ENCODE measurements at regions of chr2 and their contacts with region 1.

Region 1: GRCh38 chr2:241129086-241129871 is 20.0 kb downstream of the PASK start:
- DNase-seq: no peak
- H3K4me3 ChIP-seq: no peak overlapping the region
- H3K27ac ChIP-seq: no peak overlapping the region
- H3K4me1 ChIP-seq: no peaks in the 10 kb centered on the region
- H3K27me3 ChIP-seq: no peaks in the 10 kb centered on the region
- CTCF ChIP-seq: no peak
- POLR2A ChIP-seq: no peak

Region 2: GRCh38 chr2:239216614-239217273 is 1912.5 kb before region 1 on chr2:
- intact Hi-C with region 1: no loop called
- DNase-seq: peak in 1 of 2 donors; percentile 38
- H3K4me3 ChIP-seq: no peak overlapping the region
- H3K27ac ChIP-seq: no peak overlapping the region
- H3K4me1 ChIP-seq: peaks cover 0 to under 1% of the 10 kb centered on the region in 2 donors
- H3K27me3 ChIP-seq: no peaks in the 10 kb centered on the region
- CTCF ChIP-seq: no peak
- POLR2A ChIP-seq: no peak

Region 3: GRCh38 chr2:241629762-241630435 is 500.6 kb after region 1 on chr2:
- intact Hi-C with region 1: loop called (anchors 5 kb)
- DNase-seq: no peak
- H3K4me3 ChIP-seq: no peak overlapping the region
- H3K27ac ChIP-seq: no peak overlapping the region
- H3K4me1 ChIP-seq: no peaks in the 10 kb centered on the region
- H3K27me3 ChIP-seq: no peaks in the 10 kb centered on the region
- CTCF ChIP-seq: no peak
- POLR2A ChIP-seq: no peak

Region 4: DNA sequence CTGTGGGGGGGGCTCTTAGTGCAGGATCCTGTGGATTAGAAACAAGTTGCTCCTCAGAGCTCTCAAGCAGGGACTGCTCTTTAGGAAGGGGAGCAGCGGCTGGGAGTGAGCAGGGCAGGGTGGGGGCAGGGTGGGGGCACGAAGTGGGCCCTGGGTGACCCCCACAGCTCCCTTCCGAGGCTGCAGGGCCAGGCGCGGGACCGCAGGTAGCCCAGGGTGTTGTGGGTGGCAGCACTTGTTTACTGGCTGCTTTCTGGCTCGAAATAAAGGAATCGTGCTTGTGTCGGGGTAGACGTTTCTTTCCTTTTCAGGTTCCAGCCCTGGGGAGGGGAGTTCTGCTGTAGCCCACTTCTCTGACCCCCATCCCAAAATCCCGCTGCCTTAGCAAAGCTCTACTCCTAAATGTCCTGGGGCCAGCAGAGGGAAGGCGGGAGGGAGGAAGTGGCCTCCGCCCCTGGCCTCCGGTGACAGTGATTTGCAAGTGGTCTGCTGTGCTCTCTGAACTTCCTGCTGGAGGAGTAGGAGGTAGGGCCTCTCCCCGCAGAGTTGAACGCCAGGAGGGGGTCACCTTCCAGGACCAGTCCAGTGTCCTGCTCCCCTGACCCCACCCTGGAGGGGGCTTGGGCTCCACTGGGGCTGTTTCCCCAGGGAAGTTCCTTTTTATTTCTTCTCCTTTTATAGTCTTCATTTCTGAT is 688.0 kb after region 1 on chr2:
- intact Hi-C with region 1: loop called (anchors 5 kb)
- DNase-seq: no peak
- H3K4me3 ChIP-seq: no peak overlapping the region
- H3K27ac ChIP-seq: no peak overlapping the region
- H3K4me1 ChIP-seq: no peaks in the 10 kb centered on the region
- H3K27me3 ChIP-seq: peaks cover 0 to 44% of the 10 kb centered on the region in 2 donors
- CTCF ChIP-seq: no peak
- POLR2A ChIP-seq: no peak